Activated T-helper 2 cell treated with anti-CD3 and anti-CD28 coated beads, Interferon-gamma antibody, Interleukin-2, Interleukin-4, amounts not matched to agents 10 μg/mL and 5 μg/mL and 100 μg/mL, durations not matched to agents 14 hours and 24 hours and 36 hours (primary cell): ENCODE measurements at regions of chr6 and their contacts with region 1.

Region 1: DNA sequence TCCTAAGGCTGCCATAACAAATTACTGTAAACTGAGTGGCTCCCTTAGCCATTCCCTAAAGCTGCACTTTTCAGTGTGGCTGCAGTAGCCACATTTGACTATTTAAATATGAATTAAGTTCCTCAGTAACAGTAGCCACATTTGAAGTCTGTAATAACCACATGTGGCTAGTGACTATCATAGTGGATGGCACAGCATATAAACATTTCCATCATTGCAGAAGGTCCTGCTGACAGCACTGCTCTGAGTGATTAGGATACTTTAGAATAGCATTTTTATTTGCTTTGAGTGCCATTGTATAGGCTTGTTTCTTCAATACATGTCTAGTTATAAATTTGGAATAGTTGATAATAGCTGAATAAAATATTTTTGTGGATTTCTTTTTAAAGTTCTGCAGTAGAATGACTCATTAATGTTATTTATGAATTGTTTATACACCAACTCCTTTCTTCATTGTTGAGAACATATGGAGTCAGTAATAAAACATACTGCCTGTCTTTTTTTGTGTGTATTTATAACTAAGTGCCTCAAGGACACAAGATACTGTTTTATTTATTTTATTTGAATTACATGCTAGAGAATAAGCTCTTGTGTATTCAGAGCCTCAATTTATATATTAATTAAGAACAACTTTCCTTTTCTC is 217.2 kb downstream of the CDKAL1 start:
- DNase-seq: no peak
- H3K4me3 Mint-ChIP-seq: no peak overlapping the region
- H3K27ac Mint-ChIP-seq: no peak overlapping the region
- H3K4me1 Mint-ChIP-seq: peaks cover 3% of the 10 kb centered on the region
- H3K27me3 Mint-ChIP-seq: no peaks in the 10 kb centered on the region

Region 2: DNA sequence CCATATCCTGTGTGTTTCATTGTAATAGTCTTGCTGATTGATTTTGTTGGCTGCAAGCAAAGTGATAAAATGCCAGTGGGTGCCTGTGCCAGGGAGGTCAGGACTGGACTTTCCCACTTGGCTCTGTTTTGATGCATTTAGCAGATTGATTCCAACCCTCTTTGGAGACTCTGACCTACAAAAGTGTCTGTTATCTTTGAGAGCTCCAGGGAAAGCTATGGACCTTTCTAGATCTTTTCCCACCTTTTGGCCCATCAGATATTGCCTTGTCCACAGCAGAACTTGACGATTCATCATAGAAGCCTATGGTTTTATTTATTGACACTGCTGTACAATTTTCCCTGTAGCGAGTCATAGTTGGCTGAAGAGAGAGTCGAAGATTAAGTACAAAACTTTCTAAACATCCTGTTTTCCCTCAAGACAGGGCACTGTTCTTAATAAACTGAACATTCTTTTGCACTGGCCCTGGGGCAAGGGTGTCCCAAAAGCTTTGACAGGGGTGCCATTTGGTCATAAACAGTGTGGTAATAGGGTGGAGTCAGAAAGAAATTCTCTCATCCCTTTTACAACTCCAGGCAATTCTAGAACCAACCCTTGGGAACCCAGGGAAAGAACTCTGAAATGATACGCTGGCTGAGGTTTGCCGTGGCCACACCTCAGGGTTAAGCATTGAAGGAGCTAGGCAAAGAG is 296.0 kb before region 1 on chr6:
- intact Hi-C with region 1: no loop called
- DNase-seq: no peak
- H3K4me3 Mint-ChIP-seq: no peak overlapping the region
- H3K27ac Mint-ChIP-seq: peak overlapping the region; percentile 67
- H3K4me1 Mint-ChIP-seq: peaks cover 40% of the 10 kb centered on the region
- H3K27me3 Mint-ChIP-seq: no peaks in the 10 kb centered on the region

Region 3: DNA sequence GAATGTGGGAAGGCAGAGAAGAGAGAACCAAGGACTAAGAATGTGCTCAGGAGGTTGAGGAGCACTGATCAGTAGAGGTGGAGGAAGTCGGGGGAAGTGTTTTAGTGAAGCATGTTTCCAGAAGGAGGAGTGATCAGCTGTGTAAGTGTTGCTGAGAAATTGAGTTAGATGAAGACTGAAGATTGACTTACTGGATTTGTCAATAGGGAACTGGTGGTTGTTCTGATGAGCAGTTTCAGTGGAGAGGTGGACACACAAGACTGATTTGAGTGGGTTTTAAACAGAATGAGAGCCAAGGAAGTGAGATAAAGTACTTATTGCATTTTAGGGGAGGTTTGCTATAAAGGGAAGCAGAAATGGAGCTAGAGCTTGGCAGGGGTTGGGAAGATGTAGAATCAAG is 34.5 kb before region 1 on chr6:
- intact Hi-C with region 1: loop called (anchors 2 kb)
- DNase-seq: no peak
- H3K4me3 Mint-ChIP-seq: no peak overlapping the region
- H3K27ac Mint-ChIP-seq: no peak overlapping the region
- H3K4me1 Mint-ChIP-seq: peaks cover 26% of the 10 kb centered on the region
- H3K27me3 Mint-ChIP-seq: no peaks in the 10 kb centered on the region